Activated T-helper 2 cell treated with anti-CD3 and anti-CD28 coated beads, Interferon-gamma antibody, Interleukin-2, Interleukin-4, amounts not matched to agents 10 μg/mL and 5 μg/mL and 100 μg/mL, durations not matched to agents 14 hours and 24 hours and 36 hours (primary cell): ENCODE measurements at regions of chr9 and their contacts with region 1.

Region 1: DNA sequence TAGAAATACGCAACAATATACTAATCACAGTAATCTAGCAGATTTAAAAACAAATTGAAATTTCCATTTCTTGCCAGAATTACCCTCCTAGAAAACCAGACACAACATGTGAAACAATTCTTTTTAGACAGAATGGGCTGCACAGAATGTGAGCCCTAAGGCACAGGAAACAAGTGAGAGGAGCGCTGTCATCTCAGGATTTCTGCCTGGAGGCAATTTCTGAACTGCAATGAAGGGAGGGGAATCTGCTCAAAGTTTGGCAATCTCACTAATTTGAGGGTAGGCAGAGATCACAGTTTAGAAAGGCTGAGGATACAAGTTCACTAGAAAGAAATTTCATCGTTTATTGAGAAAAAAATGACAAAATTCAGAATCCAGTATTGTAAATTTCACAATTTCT is 70.3 kb downstream of the INIP start:
- DNase-seq: no peak
- H3K4me3 Mint-ChIP-seq: no peak overlapping the region
- H3K27ac Mint-ChIP-seq: no peak overlapping the region
- H3K4me1 Mint-ChIP-seq: no peaks in the 10 kb centered on the region
- H3K27me3 Mint-ChIP-seq: no peaks in the 10 kb centered on the region

Region 2: GRCh38 chr9:112249277-112249676 is 398.3 kb before region 1 on chr9:
- intact Hi-C with region 1: no loop called
- DNase-seq: no peak
- H3K4me3 Mint-ChIP-seq: no peak overlapping the region
- H3K27ac Mint-ChIP-seq: peak overlapping the region; percentile 34
- H3K4me1 Mint-ChIP-seq: peaks cover 26% of the 10 kb centered on the region
- H3K27me3 Mint-ChIP-seq: no peaks in the 10 kb centered on the region

Region 3: DNA sequence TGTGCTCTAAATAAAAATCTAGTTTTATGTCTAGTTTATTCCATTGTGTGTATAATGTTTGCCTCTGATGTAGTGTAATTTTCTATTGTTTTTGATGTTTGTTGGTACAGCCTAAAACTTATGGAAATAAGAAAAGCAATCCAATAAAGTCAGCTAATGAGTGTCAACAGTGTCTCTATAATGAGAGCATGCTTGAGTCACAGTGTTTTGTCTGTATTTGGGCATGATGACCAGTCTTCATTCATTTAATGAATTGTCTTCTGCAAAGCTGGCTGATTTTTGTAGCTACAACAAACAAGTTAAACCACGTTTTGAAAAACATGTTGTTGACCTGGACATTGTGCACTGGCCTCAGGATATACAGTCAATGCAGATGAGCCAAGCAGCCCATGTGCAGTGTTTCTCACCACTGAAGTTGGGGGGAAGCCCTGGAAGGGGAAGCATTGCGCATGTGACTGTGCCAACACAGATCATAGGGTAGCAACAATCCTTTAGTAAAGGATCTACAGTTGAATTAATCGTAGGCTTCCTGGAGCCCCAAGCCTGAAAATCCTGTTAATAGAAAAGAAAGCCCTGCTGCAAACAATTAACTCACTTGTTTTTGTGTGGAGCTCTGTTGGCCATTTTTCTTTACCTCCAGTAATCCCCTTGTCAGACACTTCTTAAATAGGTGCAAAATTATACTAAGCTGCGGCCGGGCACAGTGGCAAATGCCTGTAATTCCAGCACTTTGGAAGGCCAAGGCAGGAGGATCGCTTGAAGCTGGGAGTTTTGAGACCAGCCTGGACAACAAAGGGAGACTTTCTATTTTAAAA is 17.7 kb before region 1 on chr9:
- intact Hi-C with region 1: loop called (anchors 1 kb)
- DNase-seq: no peak
- H3K4me3 Mint-ChIP-seq: no peak overlapping the region
- H3K27ac Mint-ChIP-seq: no peak overlapping the region
- H3K4me1 Mint-ChIP-seq: no peaks in the 10 kb centered on the region
- H3K27me3 Mint-ChIP-seq: no peaks in the 10 kb centered on the region

Region 4: GRCh38 chr9:112793213-112793810 is 145.7 kb after region 1 on chr9:
- intact Hi-C with region 1: no loop called
- DNase-seq: peak; percentile 59
- H3K4me3 Mint-ChIP-seq: no peak overlapping the region
- H3K27ac Mint-ChIP-seq: no peak overlapping the region
- H3K4me1 Mint-ChIP-seq: peaks cover 4% of the 10 kb centered on the region
- H3K27me3 Mint-ChIP-seq: no peaks in the 10 kb centered on the region

Region 5: GRCh38 chr9:113178087-113178486 is 530.5 kb after region 1 on chr9:
- intact Hi-C with region 1: no loop called
- DNase-seq: no peak
- H3K4me3 Mint-ChIP-seq: no peak overlapping the region
- H3K27ac Mint-ChIP-seq: no peak overlapping the region
- H3K4me1 Mint-ChIP-seq: no peaks in the 10 kb centered on the region
- H3K27me3 Mint-ChIP-seq: no peaks in the 10 kb centered on the region